Activated CD4-positive, alpha-beta T cell treated with anti-CD3 and anti-CD28 coated beads, Interleukin-2, amount 10 ng/mL, durations not matched to agents 24 days and 14 days (primary cell): ENCODE measurements at regions of chr11 and their contacts with region 1.

Region 1: GRCh38 chr11:120235024-120235861 is 4.7 kb upstream of the POU2F3 start:
- DNase-seq: peak; percentile 90
- H3K4me3 Mint-ChIP-seq: no peak overlapping the region
- H3K27ac Mint-ChIP-seq: peak overlapping the region; percentile 56
- H3K4me1 Mint-ChIP-seq: peaks cover 6% of the 10 kb centered on the region
- H3K27me3 Mint-ChIP-seq: peaks cover 56% of the 10 kb centered on the region

Region 2: GRCh38 chr11:120108154-120108865 is 126.9 kb before region 1 on chr11:
- intact Hi-C with region 1: no loop called
- DNase-seq: peak; percentile 88
- H3K4me3 Mint-ChIP-seq: no peak overlapping the region
- H3K27ac Mint-ChIP-seq: no peak overlapping the region
- H3K4me1 Mint-ChIP-seq: no peaks in the 10 kb centered on the region
- H3K27me3 Mint-ChIP-seq: no peaks in the 10 kb centered on the region

Region 3: GRCh38 chr11:120303004-120303637 is 67.9 kb after region 1 on chr11:
- intact Hi-C with region 1: loop called (anchors 1 kb)
- DNase-seq: peak; percentile 90
- H3K4me3 Mint-ChIP-seq: no peak overlapping the region
- H3K27ac Mint-ChIP-seq: no peak overlapping the region
- H3K4me1 Mint-ChIP-seq: peaks cover 2% of the 10 kb centered on the region
- H3K27me3 Mint-ChIP-seq: peaks cover 30% of the 10 kb centered on the region